HepG2 (cell line): ENCODE measurements at regions of chr1 and their contacts with region 1.

Region 1: GRCh38 chr1:156226116-156226538 is 13.3 kb downstream of the PMF1 start:
- DNase-seq: no peak
- ATAC-seq: no peak
- H3K4me3 ChIP-seq: no peak overlapping the region
- H3K27ac ChIP-seq: no peak overlapping the region
- H3K4me1 ChIP-seq: peaks cover 17% of the 10 kb centered on the region
- H3K27me3 ChIP-seq: no peaks in the 10 kb centered on the region
- CTCF ChIP-seq: no peak
- EP300 ChIP-seq: no peak
- POLR2A ChIP-seq: no peak
- RAD21 ChIP-seq: no peak

Region 2: GRCh38 chr1:156090822-156091188 is 135.3 kb before region 1 on chr1:
- CTCF ChIA-PET with region 1: no interaction called
- POLR2A ChIA-PET with region 1: no interaction called
- in situ Hi-C with region 1: no loop called
- intact Hi-C with region 1: loop called (anchors 1 kb)
- DNase-seq: peak; percentile 74
- ATAC-seq: peak; percentile 79
- H3K4me3 ChIP-seq: no peak overlapping the region
- H3K27ac ChIP-seq: no peak overlapping the region
- H3K4me1 ChIP-seq: peaks cover 47% of the 10 kb centered on the region
- H3K27me3 ChIP-seq: no peaks in the 10 kb centered on the region
- CTCF ChIP-seq: peak; percentile 92
- EP300 ChIP-seq: no peak
- POLR2A ChIP-seq: no peak
- RAD21 ChIP-seq: peak; percentile 93

Region 3: GRCh38 chr1:156140879-156141252 is 85.3 kb before region 1 on chr1:
- CTCF ChIA-PET with region 1: interaction called, 44 read pairs
- POLR2A ChIA-PET with region 1: interaction called, 38 read pairs
- in situ Hi-C with region 1: loop called (anchors 5 kb)
- intact Hi-C with region 1: loop called (anchors 1 kb)
- DNase-seq: no peak
- ATAC-seq: peak; percentile 10
- H3K4me3 ChIP-seq: no peak overlapping the region
- H3K27ac ChIP-seq: no peak overlapping the region
- H3K4me1 ChIP-seq: peaks cover 23% of the 10 kb centered on the region
- H3K27me3 ChIP-seq: no peaks in the 10 kb centered on the region
- CTCF ChIP-seq: no peak
- EP300 ChIP-seq: no peak
- POLR2A ChIP-seq: no peak
- RAD21 ChIP-seq: no peak

Region 4: DNA sequence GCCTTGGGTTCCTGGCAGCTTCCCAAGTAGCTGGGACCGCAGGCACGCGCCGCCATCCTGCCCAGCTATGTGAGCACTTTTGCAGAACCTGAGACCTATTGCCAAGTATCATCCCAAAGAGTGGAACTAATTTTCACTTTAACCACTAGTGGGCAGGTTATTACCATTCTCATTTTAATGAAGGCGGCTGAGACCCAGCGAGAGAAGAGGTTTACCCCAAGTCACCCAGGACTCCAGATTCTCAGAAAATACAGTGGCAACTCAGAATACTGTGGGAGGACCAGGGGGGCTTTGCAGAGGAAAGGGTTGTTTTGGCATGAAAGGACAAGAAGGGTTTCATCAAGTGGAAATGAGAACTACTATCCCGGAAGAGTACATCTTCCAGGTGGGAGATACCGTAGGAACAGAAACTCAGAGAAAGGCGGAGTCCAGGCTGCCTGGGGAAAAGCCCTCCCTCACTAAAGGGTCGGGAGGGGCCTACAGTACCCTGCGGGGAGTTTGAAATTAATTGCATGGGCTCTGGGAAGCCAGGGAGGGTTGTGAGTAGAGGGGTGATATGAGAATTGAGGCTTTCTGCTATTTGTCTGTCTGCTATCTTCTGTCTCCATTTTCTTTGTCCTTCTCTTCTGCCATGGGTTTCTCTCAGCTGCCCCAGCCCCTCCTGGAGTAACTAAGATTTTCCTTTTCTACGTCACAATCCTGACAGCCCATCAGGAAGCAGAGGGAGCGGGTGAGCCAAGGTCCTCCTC is 79.9 kb before region 1 on chr1:
- CTCF ChIA-PET with region 1: interaction called, 44 read pairs
- POLR2A ChIA-PET with region 1: interaction called, 38 read pairs
- in situ Hi-C with region 1: loop called (anchors 5 kb)
- intact Hi-C with region 1: loop called (anchors 1 kb)
- DNase-seq: peak; percentile 86
- ATAC-seq: peak; percentile 68
- H3K4me3 ChIP-seq: peak overlapping the region; percentile 44 to 63 (median 60)
- H3K27ac ChIP-seq: peak overlapping the region; percentile 31
- H3K4me1 ChIP-seq: peaks cover 59% of the 10 kb centered on the region
- H3K27me3 ChIP-seq: no peaks in the 10 kb centered on the region
- CTCF ChIP-seq: peak; percentile 92
- EP300 ChIP-seq: no peak
- POLR2A ChIP-seq: no peak
- RAD21 ChIP-seq: peak; percentile 92

Region 5: GRCh38 chr1:156198831-156199349 is 27.2 kb before region 1 on chr1:
- CTCF ChIA-PET with region 1: no interaction called
- POLR2A ChIA-PET with region 1: interaction called, 5 read pairs
- in situ Hi-C with region 1: no loop called
- intact Hi-C with region 1: loop called (anchors 2 kb)
- DNase-seq: no peak
- ATAC-seq: no peak
- H3K4me3 ChIP-seq: no peak overlapping the region
- H3K27ac ChIP-seq: peak overlapping the region; percentile 15
- H3K4me1 ChIP-seq: peaks cover 50% of the 10 kb centered on the region
- H3K27me3 ChIP-seq: no peaks in the 10 kb centered on the region; a peak in 1 of 5 replicates
- CTCF ChIP-seq: no peak
- EP300 ChIP-seq: no peak
- POLR2A ChIP-seq: no peak
- RAD21 ChIP-seq: no peak

Region 6: DNA sequence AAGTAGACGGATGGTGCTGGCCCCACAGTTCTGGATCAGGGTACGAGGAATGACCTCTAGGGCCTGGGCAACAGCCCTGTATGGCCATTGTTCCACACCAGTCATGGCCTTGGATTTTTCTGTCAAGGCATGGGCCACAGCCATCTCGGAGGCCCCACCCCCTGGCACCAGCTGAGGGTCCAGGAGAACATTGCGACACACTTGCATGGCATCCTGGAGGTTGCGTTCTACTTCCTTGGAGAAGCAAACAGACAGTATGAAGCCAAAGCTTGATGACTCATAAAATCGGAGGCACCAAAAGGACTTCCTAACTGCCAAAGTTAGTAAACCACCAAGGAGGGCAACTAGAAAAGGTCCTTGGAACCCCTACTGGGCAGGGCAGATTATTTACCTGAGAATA is 84.8 kb after region 1 on chr1:
- CTCF ChIA-PET with region 1: no interaction called
- POLR2A ChIA-PET with region 1: no interaction called
- in situ Hi-C with region 1: no loop called
- intact Hi-C with region 1: no loop called
- DNase-seq: no peak
- ATAC-seq: no peak
- H3K4me3 ChIP-seq: no peak overlapping the region
- H3K27ac ChIP-seq: no peak overlapping the region
- H3K4me1 ChIP-seq: no peaks in the 10 kb centered on the region
- H3K27me3 ChIP-seq: no peaks in the 10 kb centered on the region
- CTCF ChIP-seq: no peak
- EP300 ChIP-seq: no peak
- POLR2A ChIP-seq: no peak
- RAD21 ChIP-seq: no peak

Region 7: GRCh38 chr1:156551866-156552265 is 325.7 kb after region 1 on chr1:
- CTCF ChIA-PET with region 1: no interaction called
- POLR2A ChIA-PET with region 1: no interaction called
- in situ Hi-C with region 1: no loop called
- intact Hi-C with region 1: no loop called
- DNase-seq: no peak
- ATAC-seq: no peak
- H3K4me3 ChIP-seq: no peak overlapping the region
- H3K27ac ChIP-seq: no peak overlapping the region
- H3K4me1 ChIP-seq: peaks cover 15% of the 10 kb centered on the region
- H3K27me3 ChIP-seq: no peaks in the 10 kb centered on the region
- CTCF ChIP-seq: no peak
- EP300 ChIP-seq: no peak
- POLR2A ChIP-seq: no peak
- RAD21 ChIP-seq: no peak